Heart right ventricle (tissue), 16 donors: ENCODE measurements at regions of chr6 and their contacts with region 1.

Region 1: DNA sequence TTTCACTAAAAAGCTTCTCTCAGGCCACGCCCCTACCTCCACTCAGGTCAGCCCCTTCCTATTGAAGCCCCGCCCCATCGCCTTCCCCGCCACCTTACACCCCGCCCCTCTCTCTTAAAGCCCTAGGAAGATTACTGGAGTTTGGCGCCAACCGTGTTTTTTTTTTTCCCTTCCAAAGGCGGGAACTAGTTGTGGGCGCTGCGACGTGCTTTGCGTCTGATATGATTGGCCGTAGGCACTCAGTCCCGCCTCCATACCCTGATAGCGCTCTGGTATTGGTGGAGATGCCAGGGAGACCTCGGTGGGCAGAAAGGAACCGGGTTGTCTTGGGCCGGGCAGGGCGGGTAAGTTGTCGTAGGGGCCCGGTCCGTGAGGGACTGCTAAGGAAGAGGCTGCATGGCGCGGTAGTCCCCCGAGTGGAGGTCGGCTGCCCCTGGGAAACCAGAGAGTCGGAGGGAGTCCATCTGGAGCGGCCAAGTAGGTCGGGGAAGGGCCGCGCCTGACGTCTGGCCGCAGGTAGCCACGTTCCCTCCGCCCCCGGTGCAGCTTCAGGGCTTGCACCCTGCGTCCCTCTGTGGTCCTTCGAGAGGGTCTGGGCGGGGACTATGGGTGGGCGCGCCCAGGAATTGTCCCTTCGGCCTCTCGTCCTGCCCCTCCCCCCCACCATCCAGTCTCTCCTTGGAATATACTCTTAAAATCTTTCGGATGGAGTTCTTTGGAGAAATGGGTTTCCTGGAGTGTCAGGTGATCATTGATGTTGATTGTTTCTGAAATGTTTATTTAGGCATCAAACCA is at the start of gene CASP8AP2:
- DNase-seq: peak; percentile 88 to 93
- ATAC-seq: peak; percentile 97 to 99 (median 98)
- H3K4me3 ChIP-seq: peak within 1 kb of the TSS; percentile 76 to 97 (median 94)
- H3K27ac ChIP-seq: peak within 1 kb of the TSS; percentile 68 to 91 (median 86)
- H3K4me1 ChIP-seq: peaks cover 7 to 20% (median 13%) of the 10 kb centered on the region in 9 donors
- H3K27me3 ChIP-seq: no peaks in the 10 kb centered on the region
- CTCF ChIP-seq: no peak
- total RNA-seq, gene CASP8AP2: 9.8 to 15.9 (median 12.4) TPM

Region 2: GRCh38 chr6:89749918-89750317 is 79.9 kb before region 1 on chr6:
- intact Hi-C with region 1: no loop called
- DNase-seq: no peak
- ATAC-seq: no peak
- H3K4me3 ChIP-seq: no peak overlapping the region
- H3K27ac ChIP-seq: no peak overlapping the region
- H3K4me1 ChIP-seq: no peaks in the 10 kb centered on the region
- H3K27me3 ChIP-seq: no peaks in the 10 kb centered on the region
- CTCF ChIP-seq: no peak

Region 3: DNA sequence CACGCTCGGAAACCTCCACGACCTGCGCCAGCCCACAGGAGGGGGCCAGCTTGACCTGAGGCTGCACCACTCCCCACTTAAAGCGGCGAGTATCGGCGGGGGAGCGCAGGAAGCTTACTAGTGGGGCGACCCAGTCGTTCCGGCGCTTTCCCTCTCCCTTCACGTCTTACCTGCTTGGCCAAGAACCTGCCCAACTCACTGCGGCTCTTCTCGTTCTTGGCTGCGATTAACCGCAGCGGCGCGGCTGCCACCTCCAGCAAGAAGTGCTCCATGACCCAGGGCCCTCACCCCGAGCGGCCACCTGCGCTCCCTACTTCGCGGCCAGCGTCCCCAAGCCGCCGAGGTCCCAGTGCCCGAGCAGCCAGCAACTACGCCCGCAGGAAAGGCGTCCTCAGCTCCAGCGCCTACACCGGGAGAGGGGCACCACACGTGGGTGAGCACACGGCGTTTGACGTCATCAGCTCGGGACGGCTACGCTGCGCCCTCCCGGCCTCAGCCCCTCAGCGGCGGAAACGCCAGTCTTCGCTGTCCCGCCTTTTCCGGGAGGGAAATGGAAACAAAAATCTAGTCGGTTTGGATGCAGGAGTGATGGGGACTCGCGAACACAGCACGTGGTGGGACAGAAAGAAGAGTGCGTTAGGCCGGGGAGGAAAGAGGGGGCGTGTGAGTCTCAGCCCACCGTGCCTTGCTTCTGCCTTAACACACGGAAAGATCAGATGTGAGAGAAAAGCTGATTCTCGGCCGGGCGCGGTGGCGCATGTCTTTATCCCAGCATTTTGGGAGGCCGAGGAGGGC is 10.3 kb before region 1 on chr6 and contains the start of gene MDN1:
- intact Hi-C with region 1: loop called in 1 of 10 experiments (anchors 1 kb)
- DNase-seq: peak; percentile 89 to 92
- ATAC-seq: peak; percentile 99 to 100 (median 100)
- H3K4me3 ChIP-seq: peak within 1 kb of the TSS; percentile 46 to 98 (median 86)
- H3K27ac ChIP-seq: peak within 1 kb of the TSS in 9 of 10 donors; percentile 78 to 94 (median 84)
- H3K4me1 ChIP-seq: peaks cover 0 to 32% (median 22%) of the 10 kb centered on the region in 9 donors
- H3K27me3 ChIP-seq: no peaks in the 10 kb centered on the region
- CTCF ChIP-seq: no peak
- total RNA-seq, gene MDN1: 17.5 to 32.0 (median 27.5) TPM

Region 4: GRCh38 chr6:89887452-89888137 is 57.8 kb after region 1 on chr6:
- intact Hi-C with region 1: no loop called
- DNase-seq: no peak
- ATAC-seq: peak in 2 of 8 donors; percentile 14 to 22
- H3K4me3 ChIP-seq: no peak overlapping the region
- H3K27ac ChIP-seq: no peak overlapping the region
- H3K4me1 ChIP-seq: no peaks in the 10 kb centered on the region
- H3K27me3 ChIP-seq: peaks cover 0 to 55% (median 50%) of the 10 kb centered on the region in 7 donors
- CTCF ChIP-seq: no peak